Endothelial cell of umbilical vein (primary cell): ENCODE measurements at regions of chr7 and their contacts with region 1.

Region 1: GRCh38 chr7:111486472-111487142 is 75.7 kb downstream of the IMMP2L start:
- DNase-seq: peak; percentile 70
- H3K4me3 ChIP-seq: no peak overlapping the region
- H3K27ac ChIP-seq: no peak overlapping the region
- H3K4me1 ChIP-seq: no peaks in the 10 kb centered on the region
- H3K27me3 ChIP-seq: no peaks in the 10 kb centered on the region
- CTCF ChIP-seq: peak; percentile 48 to 57
- POLR2A ChIP-seq: no peak

Region 2: DNA sequence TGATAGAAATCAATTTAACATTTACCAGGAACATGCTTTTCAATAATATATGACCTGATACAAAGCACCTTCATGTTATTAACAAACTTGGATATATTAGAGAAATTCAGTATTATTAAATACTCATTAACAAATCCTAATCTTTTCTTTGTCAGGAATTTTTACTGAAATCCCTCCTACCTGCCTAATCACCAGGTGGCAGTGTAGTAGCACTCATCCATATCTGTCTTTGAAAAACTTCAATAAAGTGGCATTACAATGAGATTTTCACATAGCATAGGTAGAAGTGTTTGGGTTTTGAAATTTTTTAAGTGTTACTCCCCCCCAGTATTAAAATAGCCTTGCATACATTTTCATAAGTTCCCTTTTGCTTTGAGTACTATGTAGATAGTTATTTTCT is 1642.2 kb before region 1 on chr7:
- CTCF ChIA-PET with region 1: no interaction called
- POLR2A ChIA-PET with region 1: no interaction called
- dilution Hi-C with region 1: no loop called
- intact Hi-C with region 1: loop called (anchors 10 kb)
- DNase-seq: peak; percentile 29
- H3K4me3 ChIP-seq: no peak overlapping the region
- H3K27ac ChIP-seq: no peak overlapping the region
- H3K4me1 ChIP-seq: no peaks in the 10 kb centered on the region
- H3K27me3 ChIP-seq: no peaks in the 10 kb centered on the region
- CTCF ChIP-seq: peak; percentile 20 to 27
- POLR2A ChIP-seq: no peak

Region 3: GRCh38 chr7:110090110-110090769 is 1396.4 kb before region 1 on chr7:
- CTCF ChIA-PET with region 1: no interaction called
- POLR2A ChIA-PET with region 1: no interaction called
- dilution Hi-C with region 1: no loop called
- intact Hi-C with region 1: loop called (anchors 1 kb)
- DNase-seq: peak; percentile 48
- H3K4me3 ChIP-seq: no peak overlapping the region
- H3K27ac ChIP-seq: no peak overlapping the region
- H3K4me1 ChIP-seq: no peaks in the 10 kb centered on the region
- H3K27me3 ChIP-seq: no peaks in the 10 kb centered on the region
- CTCF ChIP-seq: peak; percentile 40 to 58
- POLR2A ChIP-seq: no peak

Region 4: GRCh38 chr7:110442381-110442837 is 1044.2 kb before region 1 on chr7:
- CTCF ChIA-PET with region 1: no interaction called
- POLR2A ChIA-PET with region 1: no interaction called
- dilution Hi-C with region 1: no loop called
- intact Hi-C with region 1: loop called (anchors 5 kb)
- DNase-seq: peak; percentile 68
- H3K4me3 ChIP-seq: no peak overlapping the region
- H3K27ac ChIP-seq: no peak overlapping the region
- H3K4me1 ChIP-seq: no peaks in the 10 kb centered on the region
- H3K27me3 ChIP-seq: no peaks in the 10 kb centered on the region
- CTCF ChIP-seq: peak; percentile 64 to 81
- POLR2A ChIP-seq: no peak

Region 5: DNA sequence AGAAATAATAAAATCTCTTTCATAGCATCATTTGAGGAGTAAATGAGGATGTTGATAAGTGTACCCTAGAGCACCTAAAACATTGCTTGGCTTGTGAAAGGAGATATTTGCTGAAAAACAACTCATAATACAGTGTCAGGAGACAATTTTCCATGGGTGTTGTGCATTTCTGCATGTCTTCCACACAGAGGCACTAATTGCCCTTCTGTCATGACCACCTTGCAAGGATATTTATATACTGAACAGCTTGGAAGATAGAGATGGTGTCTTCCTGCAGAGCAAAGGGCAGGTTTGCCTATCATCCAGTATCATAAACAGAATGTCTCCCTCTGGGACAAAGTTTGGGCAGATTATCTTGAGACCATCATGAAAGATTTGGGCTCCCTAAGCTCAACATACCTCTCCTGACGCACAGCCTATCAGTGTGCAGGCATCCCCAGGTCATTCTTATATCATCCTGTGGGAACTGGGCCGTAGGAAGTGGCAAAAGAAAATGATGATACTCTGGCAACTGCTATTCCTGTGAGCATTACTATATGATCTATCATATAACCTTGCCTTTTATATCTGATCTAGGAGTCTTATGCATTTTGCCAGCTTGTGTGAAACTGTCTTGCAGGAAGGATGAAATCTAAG is 890.8 kb before region 1 on chr7:
- CTCF ChIA-PET with region 1: no interaction called
- POLR2A ChIA-PET with region 1: no interaction called
- dilution Hi-C with region 1: no loop called
- intact Hi-C with region 1: loop called (anchors 10 kb)
- DNase-seq: no peak
- H3K4me3 ChIP-seq: no peak overlapping the region
- H3K27ac ChIP-seq: no peak overlapping the region
- H3K4me1 ChIP-seq: no peaks in the 10 kb centered on the region
- H3K27me3 ChIP-seq: no peaks in the 10 kb centered on the region
- CTCF ChIP-seq: no peak
- POLR2A ChIP-seq: no peak

Region 6: GRCh38 chr7:111089822-111090426 is 396.7 kb before region 1 on chr7:
- CTCF ChIA-PET with region 1: no interaction called
- POLR2A ChIA-PET with region 1: no interaction called
- dilution Hi-C with region 1: no loop called
- intact Hi-C with region 1: loop called (anchors 1 kb)
- DNase-seq: peak; percentile 54
- H3K4me3 ChIP-seq: no peak overlapping the region
- H3K27ac ChIP-seq: no peak overlapping the region
- H3K4me1 ChIP-seq: peaks cover 3% of the 10 kb centered on the region
- H3K27me3 ChIP-seq: no peaks in the 10 kb centered on the region
- CTCF ChIP-seq: peak; percentile 44 to 52
- POLR2A ChIP-seq: no peak

Region 7: GRCh38 chr7:111329367-111330234 is 157.0 kb before region 1 on chr7:
- CTCF ChIA-PET with region 1: no interaction called
- POLR2A ChIA-PET with region 1: no interaction called
- dilution Hi-C with region 1: no loop called
- intact Hi-C with region 1: loop called (anchors 1 kb)
- DNase-seq: peak; percentile 25
- H3K4me3 ChIP-seq: no peak overlapping the region
- H3K27ac ChIP-seq: no peak overlapping the region
- H3K4me1 ChIP-seq: no peaks in the 10 kb centered on the region
- H3K27me3 ChIP-seq: no peaks in the 10 kb centered on the region
- CTCF ChIP-seq: no peak
- POLR2A ChIP-seq: no peak

Region 8: DNA sequence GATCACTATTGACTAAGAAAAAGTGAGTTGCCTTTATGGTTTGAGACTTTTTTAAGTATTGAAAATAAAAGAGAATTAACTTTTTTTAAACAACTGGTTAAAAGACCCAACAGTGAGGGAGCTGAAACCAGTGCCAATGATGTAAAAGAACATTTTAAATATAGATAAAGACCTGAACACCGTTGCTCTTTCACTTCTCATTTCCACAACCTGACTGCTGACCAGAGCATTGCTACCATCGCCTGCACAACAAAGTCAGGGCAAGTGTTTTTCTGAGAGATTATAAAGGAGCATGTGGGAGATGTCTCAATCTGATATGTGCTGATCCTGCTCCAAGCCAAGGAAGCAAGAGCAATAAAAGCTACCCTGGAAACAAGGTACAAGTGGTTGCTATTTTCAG is 40.9 kb after region 1 on chr7:
- CTCF ChIA-PET with region 1: no interaction called
- POLR2A ChIA-PET with region 1: no interaction called
- dilution Hi-C with region 1: no loop called
- intact Hi-C with region 1: no loop called
- DNase-seq: no peak
- H3K4me3 ChIP-seq: no peak overlapping the region
- H3K27ac ChIP-seq: no peak overlapping the region
- H3K4me1 ChIP-seq: peaks cover 16% of the 10 kb centered on the region
- H3K27me3 ChIP-seq: no peaks in the 10 kb centered on the region
- CTCF ChIP-seq: no peak
- POLR2A ChIP-seq: no peak

Region 9: DNA sequence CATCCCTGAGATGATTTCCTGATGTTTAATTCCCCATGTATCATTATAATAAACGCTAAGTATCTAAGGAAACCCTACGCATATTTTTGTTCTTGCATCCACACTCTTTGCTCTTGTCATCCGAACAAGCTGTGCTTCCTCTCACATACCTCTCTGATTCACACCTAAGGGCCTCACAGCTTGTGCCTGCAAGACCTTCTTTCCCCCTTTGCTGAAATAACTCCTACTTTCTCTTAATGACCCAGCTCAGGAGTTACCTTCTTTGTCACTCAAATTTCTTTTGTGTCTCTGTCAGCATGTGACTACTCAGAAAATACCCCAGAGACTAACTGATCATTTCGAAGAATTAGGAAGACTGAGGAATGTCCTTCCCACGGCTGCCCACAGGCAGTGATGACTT is 285.0 kb after region 1 on chr7:
- CTCF ChIA-PET with region 1: no interaction called
- POLR2A ChIA-PET with region 1: no interaction called
- dilution Hi-C with region 1: no loop called
- intact Hi-C with region 1: no loop called
- DNase-seq: no peak
- H3K4me3 ChIP-seq: no peak overlapping the region
- H3K27ac ChIP-seq: no peak overlapping the region
- H3K4me1 ChIP-seq: no peaks in the 10 kb centered on the region
- H3K27me3 ChIP-seq: no peaks in the 10 kb centered on the region
- CTCF ChIP-seq: no peak
- POLR2A ChIP-seq: no peak